MCF 10A (cell line): ENCODE measurements at regions of chr2 and their contacts with region 1.

Region 1: DNA sequence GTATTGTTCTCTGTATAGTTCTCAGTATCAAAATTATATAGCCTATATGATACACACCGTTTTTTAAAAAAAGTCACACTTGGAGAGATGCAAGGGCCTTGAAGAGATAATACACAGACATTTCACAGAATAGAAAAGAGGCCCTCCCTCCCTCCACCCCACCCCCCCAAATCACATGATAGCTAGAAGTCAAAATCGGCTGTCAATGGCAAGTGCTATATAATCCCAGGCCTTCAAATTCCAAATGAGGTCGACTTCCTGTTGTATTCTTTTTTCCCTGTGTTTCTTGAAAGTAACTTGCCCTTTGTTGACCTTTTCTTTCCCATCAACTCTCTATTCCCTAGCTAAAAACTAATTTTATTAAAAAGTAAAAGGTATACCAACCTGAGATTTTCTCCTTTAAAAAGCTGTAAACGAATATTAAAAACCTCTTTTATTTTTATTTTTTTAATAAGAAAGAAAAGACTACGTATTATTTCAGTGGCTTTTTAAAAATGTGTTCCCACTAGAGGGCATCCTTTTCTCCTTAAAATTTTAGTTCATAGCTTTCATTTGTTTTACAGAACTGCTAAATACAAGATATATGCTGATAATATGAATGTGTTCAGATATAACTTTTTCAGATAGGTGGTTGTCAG is 46.6 kb downstream of the KCMF1 start:
- DNase-seq: no peak
- H3K4me3 Mint-ChIP-seq: no peak overlapping the region
- H3K27ac Mint-ChIP-seq: no peak overlapping the region
- H3K4me1 Mint-ChIP-seq: peaks cover 22% of the 10 kb centered on the region
- H3K27me3 Mint-ChIP-seq: no peaks in the 10 kb centered on the region
- CTCF ChIP-seq: peak; percentile 26

Region 2: GRCh38 chr2:84919885-84920580 is 97.5 kb before region 1 on chr2:
- CTCF ChIA-PET with region 1: interaction called, 11 read pairs
- POLR2A ChIA-PET with region 1: interaction called, 15 read pairs
- intact Hi-C with region 1: no loop called
- DNase-seq: peak; percentile 96
- H3K4me3 Mint-ChIP-seq: peak overlapping the region; percentile 61
- H3K27ac Mint-ChIP-seq: peak overlapping the region; percentile 100
- H3K4me1 Mint-ChIP-seq: peaks cover 24% of the 10 kb centered on the region
- H3K27me3 Mint-ChIP-seq: no peaks in the 10 kb centered on the region
- CTCF ChIP-seq: no peak

Region 3: GRCh38 chr2:84958135-84959044 is 59.1 kb before region 1 on chr2:
- CTCF ChIA-PET with region 1: interaction called, 7 read pairs
- POLR2A ChIA-PET with region 1: interaction called, 9 read pairs
- intact Hi-C with region 1: loop called (anchors 2 kb)
- DNase-seq: peak; percentile 97
- H3K4me3 Mint-ChIP-seq: peak overlapping the region; percentile 54
- H3K27ac Mint-ChIP-seq: peak overlapping the region; percentile 98
- H3K4me1 Mint-ChIP-seq: peaks cover 37% of the 10 kb centered on the region
- H3K27me3 Mint-ChIP-seq: no peaks in the 10 kb centered on the region
- CTCF ChIP-seq: no peak

Region 4: GRCh38 chr2:85053802-85054201 is 36.3 kb after region 1 on chr2:
- CTCF ChIA-PET with region 1: interaction called, 5 read pairs
- POLR2A ChIA-PET with region 1: interaction called, 11 read pairs
- intact Hi-C with region 1: no loop called
- DNase-seq: peak; percentile 66
- H3K4me3 Mint-ChIP-seq: peak overlapping the region; percentile 6
- H3K27ac Mint-ChIP-seq: peak overlapping the region; percentile 68
- H3K4me1 Mint-ChIP-seq: peaks cover 25% of the 10 kb centered on the region
- H3K27me3 Mint-ChIP-seq: no peaks in the 10 kb centered on the region
- CTCF ChIP-seq: no peak